AG04450 (cell line): ENCODE measurements at regions of chr1 and their contacts with region 1.

Region 1: DNA sequence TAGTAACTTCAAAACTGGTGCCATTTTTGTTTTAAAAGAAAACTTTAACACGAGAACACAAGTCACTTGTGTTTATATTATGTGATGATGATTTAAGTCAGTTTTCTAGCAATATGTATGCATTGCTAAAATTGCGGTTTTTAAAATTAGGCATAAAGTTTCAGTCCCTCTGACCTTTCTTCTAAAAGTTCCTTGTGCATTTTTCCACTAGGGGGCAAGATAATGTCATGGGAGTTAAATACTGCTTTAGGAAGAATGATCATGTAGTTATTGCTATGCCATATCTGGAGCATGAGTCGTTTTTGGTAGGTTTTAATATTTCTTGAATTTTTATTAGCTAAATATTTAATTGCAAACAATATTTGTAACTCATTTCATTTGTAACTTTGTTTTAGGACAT is 10.7 kb downstream of the CDC7 start:
- DNase-seq: no peak
- H3K4me3 ChIP-seq: no peak overlapping the region
- H3K27ac ChIP-seq: no peak overlapping the region
- H3K27me3 ChIP-seq: no peaks in the 10 kb centered on the region
- CTCF ChIP-seq: peak; percentile 81

Region 2: DNA sequence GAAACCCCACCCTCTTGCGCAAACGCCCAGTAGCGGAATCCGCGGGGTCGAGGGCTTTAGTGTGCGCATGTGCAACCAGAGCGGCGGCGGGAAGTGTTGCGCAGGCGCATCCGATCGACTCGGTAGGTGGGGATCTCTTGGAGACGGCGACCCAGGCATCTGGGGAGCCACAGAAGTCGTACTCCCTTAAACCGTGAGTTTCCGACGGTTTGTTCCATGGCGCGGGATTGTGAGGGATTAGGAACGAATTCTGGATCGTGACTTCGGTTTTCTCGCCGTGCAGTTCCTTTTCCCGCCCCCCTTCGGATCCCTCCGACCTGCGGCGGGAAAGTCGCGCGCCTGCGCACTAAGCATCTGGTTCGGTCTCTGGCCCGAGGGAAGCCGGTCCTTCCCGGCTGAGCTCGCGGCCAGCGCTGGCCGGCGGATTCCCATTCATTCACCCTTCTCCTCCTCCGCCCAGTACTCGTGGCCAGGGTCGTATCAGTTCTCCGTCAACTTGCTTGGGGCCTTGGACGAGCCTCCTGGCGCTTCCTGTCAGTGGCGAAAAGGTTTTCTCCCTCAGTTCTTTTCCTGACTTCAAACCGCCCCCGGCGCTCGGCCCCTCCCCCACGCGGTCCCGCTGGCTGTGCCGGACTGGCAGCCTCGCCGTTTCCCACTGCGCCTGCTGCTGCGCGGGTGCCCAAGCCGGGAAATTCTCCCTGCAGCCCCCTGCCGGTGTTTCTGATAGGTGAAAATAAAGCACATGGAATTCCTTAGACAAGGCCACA is 10.4 kb before region 1 on chr1 and contains the start of gene CDC7:
- CTCF ChIA-PET with region 1: interaction called, 56 read pairs
- POLR2A ChIA-PET with region 1: no interaction called
- DNase-seq: peak; percentile 85
- H3K4me3 ChIP-seq: peak within 1 kb of the TSS; percentile 91
- H3K27ac ChIP-seq: peak within 1 kb of the TSS; percentile 84
- H3K27me3 ChIP-seq: peaks cover 3% of the 10 kb centered on the region
- CTCF ChIP-seq: peak; percentile 58
- polyA plus RNA-seq, gene CDC7: 3.3 and 4.6 TPM in 2 replicates

Region 3: DNA sequence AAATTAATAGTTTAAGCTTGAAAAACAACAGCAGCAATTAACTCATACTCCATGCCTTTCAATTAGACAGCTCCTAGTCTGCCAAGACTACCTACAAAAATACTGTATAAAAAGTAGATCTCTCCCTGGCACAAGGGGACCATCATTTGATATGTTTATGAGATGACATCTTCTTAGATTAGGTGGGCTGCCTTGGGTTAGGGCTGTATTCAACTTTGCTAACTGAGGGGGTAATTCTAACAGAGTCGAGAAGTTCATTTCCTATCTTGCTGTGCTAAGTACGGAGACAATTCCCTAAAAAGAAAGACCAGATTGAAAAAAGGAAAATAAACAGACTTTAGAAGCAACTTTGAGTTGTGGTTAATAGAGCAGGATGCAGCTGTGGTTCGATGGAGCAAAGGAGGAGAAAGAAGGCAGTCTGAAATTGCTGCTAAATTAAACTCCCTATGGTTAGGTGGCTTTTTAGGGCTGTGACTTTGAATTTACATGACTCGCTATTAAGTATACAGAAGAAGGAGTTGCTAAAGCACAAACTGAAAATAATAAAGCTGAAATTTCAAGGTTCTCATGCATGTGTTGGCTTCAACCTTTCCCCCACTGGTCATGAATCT is 64.6 kb after region 1 on chr1:
- CTCF ChIA-PET with region 1: interaction called, 27 read pairs
- POLR2A ChIA-PET with region 1: no interaction called
- DNase-seq: no peak
- H3K4me3 ChIP-seq: no peak overlapping the region
- H3K27ac ChIP-seq: no peak overlapping the region
- H3K27me3 ChIP-seq: no peaks in the 10 kb centered on the region
- CTCF ChIP-seq: no peak

Region 4: DNA sequence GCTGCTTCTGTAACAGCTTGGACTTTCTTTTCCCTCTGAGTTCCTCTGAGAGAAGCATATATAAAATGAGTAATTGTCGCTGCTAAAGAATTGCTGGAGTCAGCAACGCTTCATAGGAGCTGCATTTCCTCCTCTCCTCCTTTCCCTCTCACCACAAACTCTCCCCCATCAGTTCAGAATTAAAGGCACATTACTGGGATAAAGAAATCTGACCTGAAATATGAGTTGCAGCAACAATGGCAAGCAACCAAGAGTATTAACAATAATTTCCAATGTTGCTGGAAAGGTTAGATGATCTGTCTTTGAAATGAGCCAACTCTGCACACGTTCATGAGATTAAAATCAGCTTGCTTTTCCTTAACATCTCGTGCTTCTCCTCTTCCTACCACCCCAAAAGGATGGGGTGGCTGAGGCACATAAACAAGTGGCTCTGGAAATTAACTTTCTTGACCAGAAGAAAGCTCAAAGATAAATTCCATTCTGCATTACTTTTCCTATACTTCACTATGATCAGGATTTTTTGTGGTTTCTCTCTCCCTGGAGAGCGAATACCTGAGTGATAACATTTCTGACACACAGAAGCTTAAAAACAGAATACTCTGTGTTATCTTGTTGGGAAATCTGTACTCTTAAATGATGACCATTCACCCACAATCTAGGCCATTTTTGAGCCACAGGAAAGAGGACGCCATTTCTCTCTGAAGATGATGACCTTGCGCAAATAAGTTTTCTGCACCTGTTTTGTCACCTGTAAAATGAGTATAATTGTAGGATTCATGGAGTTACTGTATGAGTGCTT is 284.4 kb after region 1 on chr1:
- CTCF ChIA-PET with region 1: interaction called, 28 read pairs
- POLR2A ChIA-PET with region 1: no interaction called
- DNase-seq: peak; percentile 30
- H3K4me3 ChIP-seq: no peak overlapping the region
- H3K27ac ChIP-seq: peak overlapping the region; percentile 34
- H3K27me3 ChIP-seq: no peaks in the 10 kb centered on the region
- CTCF ChIP-seq: no peak

Region 5: DNA sequence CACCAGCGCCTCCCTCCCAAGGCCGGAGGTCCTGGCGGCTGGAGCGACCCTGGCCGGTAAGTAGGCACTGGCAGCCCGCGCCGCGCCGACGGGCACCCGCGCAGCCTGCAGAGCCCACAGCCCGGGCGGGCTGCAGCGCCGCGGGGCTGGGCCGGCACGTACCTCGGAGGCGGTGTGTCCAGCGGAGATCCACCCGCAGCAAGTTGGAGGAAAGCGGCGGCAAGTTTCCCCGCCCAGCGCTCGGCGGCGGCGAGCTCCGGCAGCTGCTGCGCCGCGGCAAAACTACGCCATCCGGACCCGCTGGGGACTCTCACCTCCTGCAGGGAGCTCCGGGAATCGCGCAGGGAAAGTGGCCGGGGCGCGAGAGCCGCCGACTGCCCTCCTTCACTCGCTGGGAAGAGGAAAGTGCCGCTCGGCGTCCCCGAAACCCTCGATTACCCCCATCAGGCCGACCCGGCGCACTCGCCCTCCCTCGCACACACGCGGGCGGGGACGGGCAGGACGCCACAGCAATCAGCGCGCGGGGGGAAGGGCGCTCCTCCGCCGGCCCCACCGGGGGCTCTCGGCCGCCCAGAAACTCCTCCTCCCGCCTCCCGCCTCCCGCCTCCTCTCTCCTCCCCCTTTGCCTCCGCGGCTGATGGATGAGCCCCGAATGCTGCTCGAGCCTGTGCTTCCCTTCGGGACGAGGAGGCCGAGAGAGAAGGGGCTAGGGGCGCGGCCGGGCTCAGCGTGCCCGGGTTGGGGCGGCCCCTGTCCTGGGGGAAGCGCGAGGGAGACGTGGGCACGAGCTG is 374.5 kb after region 1 on chr1 and contains the start of gene TGFBR3:
- CTCF ChIA-PET with region 1: interaction called, 59 read pairs
- POLR2A ChIA-PET with region 1: no interaction called
- DNase-seq: peak; percentile 87
- H3K4me3 ChIP-seq: peak within 1 kb of the TSS; percentile 80
- H3K27ac ChIP-seq: peak within 1 kb of the TSS; percentile 78
- H3K27me3 ChIP-seq: no peaks in the 10 kb centered on the region
- CTCF ChIP-seq: peak; percentile 59
- polyA plus RNA-seq, gene TGFBR3: 24.2 and 36.5 TPM in 2 replicates

Region 6: GRCh38 chr1:91924146-91924545 is 412.8 kb after region 1 on chr1:
- CTCF ChIA-PET with region 1: interaction called, 303 read pairs
- POLR2A ChIA-PET with region 1: no interaction called
- DNase-seq: peak; percentile 51
- H3K4me3 ChIP-seq: no peak overlapping the region
- H3K27ac ChIP-seq: peak overlapping the region; percentile 25
- H3K27me3 ChIP-seq: no peaks in the 10 kb centered on the region
- CTCF ChIP-seq: no peak

Region 7: DNA sequence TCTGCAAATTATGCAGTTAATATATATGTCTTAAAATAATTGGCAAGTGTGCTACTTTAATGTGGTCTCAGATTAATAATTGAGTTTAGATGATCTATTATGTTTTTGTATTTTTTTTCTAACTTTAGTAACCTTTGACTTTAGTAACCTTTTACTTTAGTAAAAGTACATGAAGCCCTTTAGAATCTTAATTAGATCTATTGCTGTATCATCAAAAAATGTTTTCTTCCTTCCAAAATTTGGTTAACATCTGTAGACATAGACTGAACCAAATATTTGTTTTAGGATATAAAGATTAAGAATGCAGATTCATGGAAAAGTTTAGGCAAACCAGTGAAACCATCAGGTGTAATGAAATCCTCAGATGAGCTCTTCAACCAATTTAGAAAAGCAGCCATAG is 492.7 kb after region 1 on chr1:
- CTCF ChIA-PET with region 1: no interaction called
- POLR2A ChIA-PET with region 1: no interaction called
- DNase-seq: no peak
- H3K4me3 ChIP-seq: no peak overlapping the region
- H3K27ac ChIP-seq: no peak overlapping the region
- H3K27me3 ChIP-seq: no peaks in the 10 kb centered on the region
- CTCF ChIP-seq: no peak

Region 8: GRCh38 chr1:92030656-92031107 is 519.3 kb after region 1 on chr1:
- CTCF ChIA-PET with region 1: interaction called, 11 read pairs
- POLR2A ChIA-PET with region 1: no interaction called
- DNase-seq: no peak
- H3K4me3 ChIP-seq: peak overlapping the region; percentile 65
- H3K27ac ChIP-seq: peak overlapping the region; percentile 39
- H3K27me3 ChIP-seq: no peaks in the 10 kb centered on the region
- CTCF ChIP-seq: no peak